ENCODE measurements at regions of chr2 and their contacts with region 1.

Region 1: GRCh38 chr2:241257417-241258032 is 57.9 kb downstream of the HDLBP start:
- DNase-seq: no peak
- ATAC-seq: no peak
- H3K4me3 ChIP-seq: no peak overlapping the region
- H3K27ac ChIP-seq: no peak overlapping the region
- H3K4me1 ChIP-seq: peaks cover 0 to 10% (median 0%) of the 10 kb centered on the region in 9 donors
- H3K27me3 ChIP-seq: no peaks in the 10 kb centered on the region
- CTCF ChIP-seq: peak in 1 of 9 donors; percentile 12

Region 2: GRCh38 chr2:241329669-241330615 is 72.4 kb after region 1 on chr2:
- intact Hi-C with region 1: no loop called
- DNase-seq: no peak
- ATAC-seq: no peak
- H3K4me3 ChIP-seq: no peak overlapping the region
- H3K27ac ChIP-seq: no peak overlapping the region
- H3K4me1 ChIP-seq: peaks cover 0 to 7% (median 6%) of the 10 kb centered on the region in 9 donors
- H3K27me3 ChIP-seq: no peaks in the 10 kb centered on the region
- CTCF ChIP-seq: no peak

Region 3: DNA sequence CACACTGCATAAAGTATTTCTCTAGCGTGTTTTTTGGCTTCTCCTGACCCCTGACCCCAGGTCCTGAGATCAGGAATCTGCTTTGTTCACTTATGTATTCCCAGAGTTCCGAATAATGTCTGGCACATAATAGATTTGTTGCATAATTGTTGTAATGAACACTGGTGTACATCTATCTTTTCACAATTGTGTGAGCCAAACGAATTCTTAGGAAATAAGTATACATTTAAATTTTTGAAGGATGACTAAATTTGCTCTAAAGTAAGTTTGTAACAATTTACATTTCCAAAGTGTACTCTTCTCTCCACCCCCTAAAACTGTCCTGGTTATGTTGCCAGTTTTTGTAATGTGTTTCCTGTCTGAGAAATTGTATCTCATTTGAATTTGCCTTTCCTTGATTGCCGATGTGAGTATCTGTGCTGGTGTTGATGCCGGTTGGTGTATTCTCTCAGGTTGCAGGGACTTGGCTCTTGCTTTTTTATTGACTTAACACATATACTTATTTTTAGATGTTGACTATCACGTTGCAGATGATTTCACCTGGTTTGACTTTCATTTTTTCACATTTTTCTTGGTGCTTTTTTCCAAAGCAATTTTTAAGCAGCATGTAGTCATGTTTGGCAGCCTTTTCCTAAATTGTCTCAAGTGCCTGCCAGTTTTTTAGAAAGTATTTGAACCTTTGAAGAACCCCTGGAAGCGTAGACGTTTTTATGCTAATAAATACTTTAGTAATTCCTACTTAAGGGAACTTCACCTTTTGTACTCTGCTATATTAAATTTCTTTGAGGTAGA is 82.5 kb after region 1 on chr2:
- intact Hi-C with region 1: loop called in 1 of 10 experiments (anchors 10 kb)
- DNase-seq: no peak
- ATAC-seq: peak in 1 of 8 donors; percentile 19
- H3K4me3 ChIP-seq: no peak overlapping the region
- H3K27ac ChIP-seq: peak overlapping the region in 1 of 10 donors; percentile 46
- H3K4me1 ChIP-seq: peaks cover 0 to 19% (median 8%) of the 10 kb centered on the region in 9 donors
- H3K27me3 ChIP-seq: no peaks in the 10 kb centered on the region
- CTCF ChIP-seq: no peak

Region 4: DNA sequence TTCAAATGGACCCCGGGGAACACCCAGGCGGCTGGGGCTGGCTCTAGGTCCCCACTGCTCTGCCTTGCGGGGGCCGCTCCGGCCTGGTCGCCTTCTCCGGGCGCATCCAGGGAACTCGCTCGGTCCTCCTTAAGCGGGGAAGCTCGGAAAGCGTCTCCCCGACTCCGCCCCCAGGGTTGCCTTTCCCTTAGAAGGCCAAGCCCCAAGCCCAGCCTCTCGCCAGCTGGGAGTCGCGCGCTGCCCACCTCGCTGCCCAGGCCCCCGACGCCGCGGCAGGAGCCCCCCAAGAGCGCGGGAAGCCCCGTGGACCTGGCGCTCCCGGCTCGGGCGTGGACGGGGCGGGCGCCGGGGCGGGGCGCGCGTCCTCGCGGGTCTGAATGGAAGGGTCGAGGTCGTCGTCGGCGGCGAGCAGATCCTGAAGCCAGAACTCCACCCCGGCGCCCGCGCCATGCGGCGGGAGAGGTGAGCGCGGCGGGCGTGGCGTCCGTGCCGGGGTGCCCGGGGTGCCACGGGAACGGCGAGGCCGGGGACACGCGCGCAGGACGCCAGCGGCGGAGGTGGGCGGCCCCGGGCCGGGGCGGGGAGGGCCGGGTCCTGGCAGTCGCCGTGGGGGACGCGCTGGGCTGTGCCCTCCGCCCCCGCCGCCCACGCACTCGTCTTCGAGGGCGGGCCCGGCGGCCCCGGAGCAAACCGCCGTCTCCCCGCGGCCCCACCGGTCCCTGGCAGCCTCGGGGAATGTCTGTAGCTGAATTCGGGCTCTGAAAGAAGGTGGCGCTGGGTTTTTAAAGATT is 301.2 kb after region 1 on chr2 and contains the start of gene BOK:
- intact Hi-C with region 1: no loop called
- DNase-seq: peak; percentile 55 to 66
- ATAC-seq: peak; percentile 20 to 66 (median 46)
- H3K4me3 ChIP-seq: peak within 1 kb of the TSS; percentile 53 to 74 (median 59)
- H3K27ac ChIP-seq: peak within 1 kb of the TSS; percentile 30 to 83 (median 72)
- H3K4me1 ChIP-seq: peaks cover 11 to 39% (median 26%) of the 10 kb centered on the region in 9 donors
- H3K27me3 ChIP-seq: peaks cover 0 to 33% (median 5%) of the 10 kb centered on the region in 7 donors
- CTCF ChIP-seq: no peak
- total RNA-seq, gene BOK: 2.3 to 15.6 (median 3.3) TPM

Region 5: DNA sequence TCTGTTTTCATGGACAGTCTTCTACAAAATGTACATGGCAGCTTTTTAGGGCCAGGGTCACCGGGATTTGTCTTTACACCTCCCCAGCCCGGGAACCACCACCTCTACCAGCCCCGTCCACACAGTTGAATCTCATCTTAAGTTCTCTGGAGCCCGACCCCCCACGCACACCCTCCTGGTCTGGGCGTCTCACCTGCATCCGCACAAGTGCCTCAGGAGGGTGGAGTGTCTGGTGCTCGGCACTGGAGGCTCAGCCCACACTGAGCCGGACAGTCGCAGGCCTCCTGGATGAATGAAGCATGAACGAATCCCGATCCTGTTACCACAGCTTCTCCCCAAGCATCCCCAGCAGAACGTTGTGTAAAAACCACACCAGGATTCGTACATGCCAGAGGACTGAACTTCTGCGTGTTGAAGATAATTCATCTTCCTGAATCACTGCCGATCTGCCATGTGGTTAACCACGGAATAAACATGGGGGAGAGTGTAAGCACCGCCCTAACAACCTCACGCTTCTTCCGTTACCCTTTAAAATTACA is 774.0 kb after region 1 on chr2:
- intact Hi-C with region 1: no loop called
- DNase-seq: no peak
- ATAC-seq: no peak
- H3K4me3 ChIP-seq: no peak overlapping the region
- H3K27ac ChIP-seq: no peak overlapping the region
- H3K4me1 ChIP-seq: no peaks in the 10 kb centered on the region
- H3K27me3 ChIP-seq: peaks cover 0 to 64% (median 26%) of the 10 kb centered on the region in 7 donors
- CTCF ChIP-seq: no peak